Activated B cell treated with CpG ODN at 0.5 μM for 24 hours (primary cell): ENCODE measurements at regions of chr13 and their contacts with region 1.

Region 1: DNA sequence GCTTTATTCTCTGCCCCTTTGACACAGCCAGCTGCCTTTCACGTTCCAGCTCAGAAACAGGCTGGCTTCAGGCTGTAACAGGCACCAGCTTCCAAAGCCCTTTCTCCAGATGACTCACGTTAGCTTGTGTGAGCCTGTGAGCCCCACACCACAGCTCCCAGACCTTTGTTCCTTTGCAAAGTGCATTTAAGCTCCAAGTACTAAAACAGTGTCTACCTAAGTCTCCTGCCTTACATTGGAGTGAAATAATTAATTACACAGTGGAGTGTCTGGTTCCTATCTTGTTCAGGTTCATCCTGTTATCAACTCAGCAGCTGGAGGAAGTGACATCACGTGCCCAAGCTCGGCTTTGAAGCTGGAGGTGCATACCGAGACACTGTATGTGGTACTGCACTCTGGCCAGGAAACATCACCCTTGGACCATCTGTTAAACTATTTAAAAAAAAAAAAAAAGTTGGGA is 475.8 kb downstream of the FOXO1 start:
- DNase-seq: no peak
- ATAC-seq: peak; percentile 93
- H3K4me3 Mint-ChIP-seq: peak overlapping the region; percentile 53
- H3K27ac Mint-ChIP-seq: peak overlapping the region; percentile 69
- H3K4me1 Mint-ChIP-seq: peaks cover 28% of the 10 kb centered on the region
- H3K27me3 Mint-ChIP-seq: no peaks in the 10 kb centered on the region
- CTCF ChIP-seq: no peak

Region 2: GRCh38 chr13:39501702-39502324 is 688.9 kb before region 1 on chr13:
- CTCF ChIA-PET with region 1: no interaction called
- POLR2A ChIA-PET with region 1: no interaction called
- intact Hi-C with region 1: no loop called
- DNase-seq: no peak
- ATAC-seq: no peak
- H3K4me3 Mint-ChIP-seq: no peak overlapping the region
- H3K27ac Mint-ChIP-seq: no peak overlapping the region
- H3K4me1 Mint-ChIP-seq: no peaks in the 10 kb centered on the region
- H3K27me3 Mint-ChIP-seq: no peaks in the 10 kb centered on the region
- CTCF ChIP-seq: no peak

Region 3: DNA sequence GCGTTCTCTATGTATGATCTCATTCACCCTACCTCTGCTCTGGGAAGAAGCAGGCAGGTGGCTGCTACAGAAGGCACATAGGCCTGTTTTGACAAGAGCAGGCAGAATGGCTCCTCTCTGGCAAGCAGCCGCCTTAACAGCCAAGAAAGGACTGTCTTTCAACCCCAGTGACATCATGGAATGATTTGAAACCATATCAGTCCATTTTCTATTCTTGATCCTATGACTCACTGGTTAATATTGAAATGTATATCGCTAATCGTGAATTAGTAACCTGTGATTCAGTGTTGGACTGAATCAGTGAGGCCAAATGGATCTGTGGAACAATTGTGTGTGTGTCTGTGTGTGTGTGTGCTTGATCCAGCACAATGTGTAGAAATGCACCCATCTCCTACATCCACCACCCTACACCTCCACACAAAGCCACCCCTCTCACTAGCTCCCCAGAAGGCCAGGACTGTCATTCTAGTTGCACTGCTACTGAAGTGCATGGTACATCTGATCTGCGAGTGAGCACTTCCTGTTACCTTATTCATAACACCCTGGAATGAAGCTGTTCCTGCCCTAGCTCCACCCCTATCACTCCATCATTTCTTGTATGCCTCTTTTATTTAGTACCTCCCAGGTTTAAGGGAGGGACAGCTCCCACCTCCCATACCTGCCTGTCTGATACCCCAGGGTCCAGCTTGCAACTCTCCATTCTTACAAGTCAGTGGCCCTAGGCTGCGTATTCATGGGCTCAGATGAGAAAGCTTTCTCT is 15.8 kb after region 1 on chr13:
- CTCF ChIA-PET with region 1: interaction called, 4 read pairs
- POLR2A ChIA-PET with region 1: interaction called, 12 read pairs
- intact Hi-C with region 1: loop called (anchors 2 kb)
- DNase-seq: peak; percentile 52
- ATAC-seq: peak; percentile 66
- H3K4me3 Mint-ChIP-seq: peak overlapping the region; percentile 76
- H3K27ac Mint-ChIP-seq: peak overlapping the region; percentile 100
- H3K4me1 Mint-ChIP-seq: peaks cover 72% of the 10 kb centered on the region
- H3K27me3 Mint-ChIP-seq: no peaks in the 10 kb centered on the region
- CTCF ChIP-seq: no peak